ENCODE measurements at regions of chr3 and their contacts with region 1.

Region 1: DNA sequence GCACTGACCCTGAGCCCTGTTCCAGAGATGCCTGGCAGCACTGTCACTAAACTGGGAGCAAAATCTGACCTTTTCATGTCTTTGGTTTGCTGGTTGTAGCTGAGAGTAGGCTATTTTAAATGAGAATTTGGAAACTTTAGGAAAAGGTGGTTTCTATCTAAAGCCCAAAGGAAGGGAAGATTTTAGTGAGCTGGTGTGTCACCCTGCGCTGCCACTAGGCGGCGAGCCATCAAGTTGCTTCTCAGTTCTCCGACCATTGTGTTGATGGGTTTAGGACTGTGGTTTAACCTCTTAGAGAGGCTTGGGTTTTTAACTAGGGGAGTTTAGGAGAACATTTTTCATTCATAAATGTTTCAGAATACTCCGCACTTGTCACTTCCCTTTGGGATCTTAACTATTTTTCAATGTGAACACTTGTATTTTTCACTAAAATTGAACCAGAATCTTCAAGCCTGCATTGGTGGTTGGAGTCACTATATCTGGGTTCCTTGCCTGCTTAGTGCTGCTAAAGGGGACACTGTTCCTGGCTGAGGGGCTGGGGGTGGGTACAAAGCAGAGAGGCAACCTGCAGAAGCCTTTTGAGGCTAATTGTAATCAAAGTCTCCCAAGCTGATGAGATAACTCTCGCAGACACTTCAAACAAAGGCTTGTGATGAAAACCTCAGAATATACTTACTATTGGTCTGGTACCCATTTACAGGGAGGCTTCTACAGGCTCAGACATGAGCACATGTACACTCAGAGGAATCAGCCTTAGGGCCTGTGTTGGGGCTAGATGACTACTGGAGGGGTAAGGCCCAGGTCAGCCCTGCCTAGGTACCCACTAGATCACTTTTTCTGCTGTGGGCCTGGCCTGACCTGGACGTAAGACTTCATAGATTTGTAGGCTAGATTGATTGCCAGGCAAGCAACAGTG is 16.8 kb downstream of the EXOSC7 start:
- DNase-seq: peak; percentile 34
- ATAC-seq: no peak
- H3K4me3 Mint-ChIP-seq: no peak overlapping the region
- H3K27ac Mint-ChIP-seq: no peak overlapping the region
- H3K4me1 Mint-ChIP-seq: peaks cover 57% of the 10 kb centered on the region
- H3K27me3 Mint-ChIP-seq: no peaks in the 10 kb centered on the region
- CTCF ChIP-seq: peak; percentile 52

Region 2: DNA sequence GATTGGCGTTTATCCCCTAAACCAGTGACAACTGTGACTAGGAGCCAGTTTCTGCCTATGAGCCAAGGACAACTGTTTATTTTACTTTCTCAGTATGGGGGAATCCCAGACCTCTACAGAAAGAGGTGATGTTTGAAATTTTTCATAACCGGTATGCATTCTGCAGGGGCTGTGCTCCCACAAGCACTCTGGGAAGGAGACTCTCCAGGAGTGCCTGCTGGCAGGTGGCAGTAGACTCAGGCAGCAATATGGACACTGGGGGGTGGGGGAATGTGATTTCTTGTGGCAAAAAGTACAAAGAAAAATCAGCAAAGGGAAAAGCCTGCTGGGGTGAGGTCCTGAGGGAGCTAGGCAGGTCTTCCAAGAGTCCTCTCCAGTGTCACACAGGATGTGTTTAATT is 112.5 kb before region 1 on chr3:
- CTCF ChIA-PET with region 1: no interaction called
- POLR2A ChIA-PET with region 1: no interaction called
- intact Hi-C with region 1: no loop called
- DNase-seq: no peak
- ATAC-seq: no peak
- H3K4me3 Mint-ChIP-seq: no peak overlapping the region
- H3K27ac Mint-ChIP-seq: no peak overlapping the region
- H3K4me1 Mint-ChIP-seq: no peaks in the 10 kb centered on the region
- H3K27me3 Mint-ChIP-seq: peaks cover 6% of the 10 kb centered on the region
- CTCF ChIP-seq: no peak

Region 3: DNA sequence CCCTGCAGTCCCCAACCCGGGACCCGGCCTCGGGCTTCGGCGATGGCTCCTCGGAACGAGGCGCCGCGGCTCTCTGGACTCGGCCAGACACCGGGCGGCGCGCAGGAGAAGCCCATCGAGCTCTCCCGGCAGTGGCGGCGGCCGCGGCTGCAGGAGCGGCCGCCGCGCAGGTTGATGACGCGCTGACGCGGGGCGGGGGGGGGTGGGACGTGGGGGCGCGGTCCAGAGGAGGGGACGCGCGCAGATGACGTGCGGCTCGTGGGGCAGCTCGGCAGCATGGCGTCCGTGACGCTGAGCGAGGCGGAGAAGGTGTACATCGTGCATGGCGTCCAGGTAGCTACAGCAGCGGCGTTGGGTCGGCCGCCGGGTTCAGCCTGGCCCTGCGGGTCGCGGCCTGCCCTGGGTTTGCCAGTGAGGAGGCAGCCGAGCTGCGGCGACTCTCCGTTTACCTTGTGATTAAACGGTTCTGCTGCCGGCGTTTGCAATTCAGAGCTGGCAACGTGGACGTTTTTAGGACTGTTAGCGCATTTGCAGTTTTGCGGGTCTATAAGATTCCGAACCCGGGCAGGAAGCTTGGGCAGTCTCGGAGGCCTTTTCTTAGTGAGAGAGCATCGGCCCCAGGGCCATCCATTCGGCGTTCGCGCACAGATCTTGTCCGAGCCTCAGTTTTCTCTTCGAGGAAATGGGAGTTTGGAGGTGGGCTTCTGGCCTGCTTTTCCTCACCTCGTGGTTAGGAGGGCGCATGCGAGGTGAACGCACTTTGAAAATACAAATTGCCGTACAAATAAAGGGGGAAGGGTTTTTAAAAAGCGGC is 16.6 kb before region 1 on chr3 and contains the starts of genes EXOSC7 and ZDHHC3:
- CTCF ChIA-PET with region 1: interaction called, 26 read pairs
- POLR2A ChIA-PET with region 1: interaction called, 48 read pairs
- intact Hi-C with region 1: no loop called
- DNase-seq: peak; percentile 90
- ATAC-seq: peak; percentile 91
- H3K4me3 Mint-ChIP-seq: peak within 1 kb of the TSS; percentile 86
- H3K27ac Mint-ChIP-seq: peak within 1 kb of the TSS; percentile 91
- H3K4me1 Mint-ChIP-seq: peaks cover 61% of the 10 kb centered on the region
- H3K27me3 Mint-ChIP-seq: no peaks in the 10 kb centered on the region
- CTCF ChIP-seq: no peak
- total RNA-seq, gene EXOSC7: 79.8 to 80.7 TPM
- total RNA-seq, gene ZDHHC3: 28.6 to 36.0 TPM

Region 4: DNA sequence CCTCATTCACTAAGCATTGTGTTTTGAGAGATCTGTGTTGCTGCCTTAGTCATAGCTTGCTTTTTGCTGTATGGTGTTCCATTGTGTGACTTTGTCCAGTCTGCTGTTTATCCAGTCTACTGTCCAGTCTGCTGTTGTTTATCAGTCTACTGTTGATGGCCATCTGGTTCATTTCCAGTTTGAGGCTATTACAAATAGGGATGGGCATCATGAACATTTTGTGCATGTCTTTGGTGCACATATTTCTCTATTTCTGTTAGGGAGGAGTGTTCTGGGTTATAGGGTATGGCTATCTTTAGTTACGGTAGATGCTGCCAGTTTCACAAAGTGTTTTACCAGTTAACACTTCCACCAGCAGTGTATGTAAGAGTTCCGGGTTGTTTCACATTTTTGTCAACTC is 11.0 kb after region 1 on chr3:
- CTCF ChIA-PET with region 1: interaction called, 10 read pairs
- POLR2A ChIA-PET with region 1: no interaction called
- intact Hi-C with region 1: no loop called
- DNase-seq: no peak
- ATAC-seq: no peak
- H3K4me3 Mint-ChIP-seq: no peak overlapping the region
- H3K27ac Mint-ChIP-seq: no peak overlapping the region
- H3K4me1 Mint-ChIP-seq: peaks cover 18% of the 10 kb centered on the region
- H3K27me3 Mint-ChIP-seq: no peaks in the 10 kb centered on the region
- CTCF ChIP-seq: no peak